Activated CD4-positive, alpha-beta memory T cell treated with anti-CD3 and anti-CD28 coated beads, Interleukin-2, amount 10 ng/mL, durations not matched to agents 7 days and 5 days (primary cell): ENCODE measurements at regions of chrX and their contacts with region 1.

Region 1: GRCh38 chrX:154727871-154728270 is 23.0 kb downstream of the GAB3 start:
- DNase-seq: no peak
- H3K4me3 Mint-ChIP-seq: no peak overlapping the region
- H3K27ac Mint-ChIP-seq: no peak overlapping the region
- H3K4me1 Mint-ChIP-seq: peaks cover 96% of the 10 kb centered on the region
- H3K27me3 Mint-ChIP-seq: no peaks in the 10 kb centered on the region

Region 2: GRCh38 chrX:154712781-154713740 is 14.8 kb before region 1 on chrX:
- CTCF ChIA-PET with region 1: interaction called, 23 read pairs
- POLR2A ChIA-PET with region 1: interaction called, 12 read pairs
- DNase-seq: peak; percentile 53
- H3K4me3 Mint-ChIP-seq: peak overlapping the region; percentile 52
- H3K27ac Mint-ChIP-seq: peak overlapping the region; percentile 88
- H3K4me1 Mint-ChIP-seq: peaks cover 64% of the 10 kb centered on the region
- H3K27me3 Mint-ChIP-seq: no peaks in the 10 kb centered on the region